OCI-LY7 (cell line): ENCODE measurements at regions of chr1 and their contacts with region 1.

Region 1: GRCh38 chr1:61253059-61253735 is 170.8 kb downstream of the NFIA start:
- DNase-seq: no peak
- H3K4me3 ChIP-seq: no peak overlapping the region
- H3K27ac ChIP-seq: no peak overlapping the region
- H3K4me1 ChIP-seq: no peaks in the 10 kb centered on the region
- CTCF ChIP-seq: no peak

Region 2: DNA sequence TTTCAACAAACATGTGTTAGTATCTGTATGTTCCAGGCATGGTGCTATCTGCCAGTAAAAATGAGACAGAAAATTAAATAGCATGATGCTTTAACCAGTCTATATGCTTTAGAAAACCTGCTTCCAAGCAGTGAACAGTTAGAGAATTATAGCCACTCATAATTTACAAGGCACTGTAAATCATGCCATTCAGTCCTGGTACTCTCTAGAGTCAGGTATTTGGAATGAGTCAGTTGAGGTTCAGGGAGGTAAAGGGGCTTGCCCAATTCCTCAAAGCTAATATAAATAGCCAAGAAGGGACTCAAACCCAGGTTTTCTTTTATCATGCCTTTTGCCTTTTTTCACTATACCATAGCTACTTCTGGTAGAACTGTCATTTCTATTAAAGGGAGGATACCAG is 13.5 kb after region 1 on chr1:
- CTCF ChIA-PET with region 1: no interaction called
- POLR2A ChIA-PET with region 1: interaction called, 15 read pairs
- intact Hi-C with region 1: no loop called
- DNase-seq: no peak
- H3K4me3 ChIP-seq: no peak overlapping the region
- H3K27ac ChIP-seq: no peak overlapping the region
- H3K4me1 ChIP-seq: no peaks in the 10 kb centered on the region
- CTCF ChIP-seq: no peak